ENCODE measurements at regions of chrX and their contacts with region 1.

Region 1: GRCh38 chrX:77899081-77899828 is at the start of gene COX7B:
- DNase-seq: peak; percentile 89 to 94 (median 93)
- H3K4me3 ChIP-seq: peak within 1 kb of the TSS; percentile 83 to 98 (median 85)
- H3K4me3 Mint-ChIP-seq: peak within 1 kb of the TSS; percentile 86 to 94
- H3K27ac ChIP-seq: peak within 1 kb of the TSS; percentile 84 to 89
- H3K27ac Mint-ChIP-seq: peak within 1 kb of the TSS; percentile 93 to 98 (median 96)
- H3K4me1 ChIP-seq: peaks cover 6 to 8% of the 10 kb centered on the region in 2 donors
- H3K4me1 Mint-ChIP-seq: peaks cover 6% of the 10 kb centered on the region
- H3K27me3 ChIP-seq: no peaks in the 10 kb centered on the region
- H3K27me3 Mint-ChIP-seq: peaks cover 0 to 6% (median 0%) of the 10 kb centered on the region in 3 donors
- CTCF ChIP-seq: peak; percentile 21
- polyA plus RNA-seq, gene COX7B: 444 to 560 (median 526) TPM

Region 2: GRCh38 chrX:77785486-77786364 is 113.5 kb before region 1 on chrX and contains the start of gene ATRX:
- intact Hi-C with region 1: loop called in 1 of 2 experiments (anchors 5 kb)
- DNase-seq: peak; percentile 59 to 76 (median 72)
- H3K4me3 ChIP-seq: peak within 1 kb of the TSS; percentile 64 to 89 (median 83)
- H3K4me3 Mint-ChIP-seq: peak within 1 kb of the TSS; percentile 97 to 98
- H3K27ac ChIP-seq: peak within 1 kb of the TSS; percentile 94 to 96
- H3K27ac Mint-ChIP-seq: peak within 1 kb of the TSS; percentile 98 to 99 (median 99)
- H3K4me1 ChIP-seq: peaks cover 23 to 25% of the 10 kb centered on the region in 2 donors
- H3K4me1 Mint-ChIP-seq: peaks cover 26% of the 10 kb centered on the region
- H3K27me3 ChIP-seq: no peaks in the 10 kb centered on the region
- H3K27me3 Mint-ChIP-seq: peaks cover 0 to 3% (median 0%) of the 10 kb centered on the region in 3 donors
- CTCF ChIP-seq: no peak
- polyA plus RNA-seq, gene ATRX: 8.6 to 18.3 (median 17.3) TPM

Region 3: DNA sequence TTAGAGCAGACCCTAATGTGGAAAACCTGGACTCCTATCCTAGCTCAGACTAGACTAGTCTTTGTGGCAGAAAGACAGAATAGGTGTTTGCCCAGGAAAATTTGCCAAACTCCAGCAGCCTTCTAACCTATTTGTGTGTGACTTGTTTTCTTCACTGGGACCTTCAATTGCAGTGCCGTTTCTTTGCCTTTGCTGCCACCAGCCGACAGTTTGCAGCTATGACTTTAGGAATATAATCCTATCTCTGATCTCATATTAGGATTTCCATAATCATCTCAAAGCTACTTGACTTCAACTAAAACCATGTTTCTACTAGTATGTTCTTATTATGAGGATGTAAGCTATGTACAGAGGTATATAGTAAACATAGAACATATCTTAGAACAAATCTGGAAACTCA is 130.4 kb after region 1 on chrX:
- intact Hi-C with region 1: loop called in 1 of 2 experiments (anchors 10 kb)
- DNase-seq: peak in 2 of 3 donors; percentile 0 to 3
- H3K4me3 ChIP-seq: no peak overlapping the region
- H3K4me3 Mint-ChIP-seq: no peak overlapping the region
- H3K27ac ChIP-seq: no peak overlapping the region
- H3K27ac Mint-ChIP-seq: no peak overlapping the region
- H3K4me1 ChIP-seq: no peaks in the 10 kb centered on the region
- H3K4me1 Mint-ChIP-seq: peaks cover 1% of the 10 kb centered on the region
- H3K27me3 ChIP-seq: no peaks in the 10 kb centered on the region
- H3K27me3 Mint-ChIP-seq: peaks cover 0 to 1% (median 0%) of the 10 kb centered on the region in 3 donors
- CTCF ChIP-seq: peak; percentile 21

Region 4: GRCh38 chrX:78104447-78105185 is 205.4 kb after region 1 on chrX:
- intact Hi-C with region 1: loop called in 1 of 2 experiments (anchors 5 kb)
- DNase-seq: peak; percentile 76 to 83 (median 77)
- H3K4me3 ChIP-seq: peak overlapping the region; percentile 82 to 97 (median 93)
- H3K4me3 Mint-ChIP-seq: peak overlapping the region; percentile 83 to 86
- H3K27ac ChIP-seq: peak overlapping the region; percentile 96 to 99
- H3K27ac Mint-ChIP-seq: peak overlapping the region; percentile 95 to 98 (median 97)
- H3K4me1 ChIP-seq: peaks cover 44 to 48% of the 10 kb centered on the region in 2 donors
- H3K4me1 Mint-ChIP-seq: peaks cover 53% of the 10 kb centered on the region
- H3K27me3 ChIP-seq: no peaks in the 10 kb centered on the region
- H3K27me3 Mint-ChIP-seq: peaks cover 0 to 2% (median 0%) of the 10 kb centered on the region in 3 donors
- CTCF ChIP-seq: no peak

Measured in CD14-positive monocyte (primary cell).